ENCODE measurements at regions of chr6 and their contacts with region 1.

Region 1: GRCh38 chr6:152267967-152268845 is 369.0 kb downstream of the SYNE1 start:
- DNase-seq: peak in 7 of 14 experiments; percentile 4 to 49 (median 38)
- ATAC-seq: no peak
- H3K4me3 ChIP-seq: no peak overlapping the region
- H3K4me3 Mint-ChIP-seq: no peak overlapping the region
- H3K27ac ChIP-seq: no peak overlapping the region
- H3K27ac Mint-ChIP-seq: no peak overlapping the region
- H3K4me1 ChIP-seq: no peaks in the 10 kb centered on the region
- H3K4me1 Mint-ChIP-seq: no peaks in the 10 kb centered on the region
- H3K27me3 ChIP-seq: no peaks in the 10 kb centered on the region
- H3K27me3 Mint-ChIP-seq: no peaks in the 10 kb centered on the region
- CTCF ChIP-seq: peak; percentile 87

Region 2: DNA sequence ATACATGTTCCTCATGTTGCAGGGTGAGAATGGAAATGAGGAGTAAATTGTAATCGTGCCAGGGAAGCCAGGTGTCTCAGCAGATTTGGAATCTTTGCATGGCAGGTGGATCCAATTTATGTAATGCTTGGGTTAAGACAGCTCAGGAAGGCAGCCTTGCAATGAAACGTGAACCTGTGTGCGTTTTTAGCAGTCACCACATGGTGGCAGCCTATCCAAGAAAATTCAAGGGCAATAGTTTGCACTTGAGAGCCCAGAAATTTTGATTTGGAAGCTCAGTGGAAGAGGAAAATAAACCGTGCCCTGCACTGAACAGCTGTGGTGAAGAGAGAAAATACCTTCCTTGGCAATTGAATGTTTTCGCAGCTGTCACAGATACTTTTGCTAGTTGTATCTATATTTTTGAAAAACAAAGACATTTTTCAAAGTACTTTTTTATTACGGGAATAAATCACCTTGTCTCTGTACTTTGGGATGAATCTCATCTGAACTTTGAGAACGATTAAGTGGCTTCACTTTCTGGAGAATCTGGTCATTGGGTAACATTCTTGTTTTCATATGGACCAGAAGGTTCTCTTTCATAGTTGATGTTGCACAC is 1376.2 kb before region 1 on chr6:
- CTCF ChIA-PET with region 1: no interaction called
- POLR2A ChIA-PET with region 1: no interaction called
- intact Hi-C with region 1: loop called in 1 of 2 experiments (anchors 5 kb)
- DNase-seq: peak; percentile 30 to 74 (median 50)
- ATAC-seq: peak; percentile 71
- H3K4me3 ChIP-seq: no peak overlapping the region
- H3K4me3 Mint-ChIP-seq: no peak overlapping the region
- H3K27ac ChIP-seq: no peak overlapping the region
- H3K27ac Mint-ChIP-seq: no peak overlapping the region
- H3K4me1 ChIP-seq: peaks cover 7% of the 10 kb centered on the region
- H3K4me1 Mint-ChIP-seq: peaks cover 19% of the 10 kb centered on the region
- H3K27me3 ChIP-seq: no peaks in the 10 kb centered on the region
- H3K27me3 Mint-ChIP-seq: no peaks in the 10 kb centered on the region
- CTCF ChIP-seq: peak; percentile 91

Region 3: GRCh38 chr6:151440930-151441329 is 827.3 kb before region 1 on chr6:
- CTCF ChIA-PET with region 1: no interaction called
- POLR2A ChIA-PET with region 1: no interaction called
- intact Hi-C with region 1: loop called in 1 of 2 experiments (anchors 2 kb)
- DNase-seq: peak in 3 of 14 experiments; percentile 46 to 67 (median 66)
- ATAC-seq: peak; percentile 66
- H3K4me3 ChIP-seq: no peak overlapping the region
- H3K4me3 Mint-ChIP-seq: no peak overlapping the region
- H3K27ac ChIP-seq: no peak overlapping the region
- H3K27ac Mint-ChIP-seq: no peak overlapping the region
- H3K4me1 ChIP-seq: peaks cover 6% of the 10 kb centered on the region
- H3K4me1 Mint-ChIP-seq: peaks cover 52% of the 10 kb centered on the region
- H3K27me3 ChIP-seq: no peaks in the 10 kb centered on the region
- H3K27me3 Mint-ChIP-seq: no peaks in the 10 kb centered on the region
- CTCF ChIP-seq: peak; percentile 65

Region 4: GRCh38 chr6:151675746-151676416 is 592.3 kb before region 1 on chr6:
- CTCF ChIA-PET with region 1: no interaction called
- POLR2A ChIA-PET with region 1: no interaction called
- intact Hi-C with region 1: loop called (anchors 2 kb)
- DNase-seq: peak; percentile 16 to 78 (median 36)
- ATAC-seq: peak; percentile 88
- H3K4me3 ChIP-seq: no peak overlapping the region
- H3K4me3 Mint-ChIP-seq: no peak overlapping the region
- H3K27ac ChIP-seq: no peak overlapping the region
- H3K27ac Mint-ChIP-seq: no peak overlapping the region
- H3K4me1 ChIP-seq: no peaks in the 10 kb centered on the region
- H3K4me1 Mint-ChIP-seq: no peaks in the 10 kb centered on the region
- H3K27me3 ChIP-seq: no peaks in the 10 kb centered on the region
- H3K27me3 Mint-ChIP-seq: no peaks in the 10 kb centered on the region
- CTCF ChIP-seq: peak; percentile 87

Region 5: DNA sequence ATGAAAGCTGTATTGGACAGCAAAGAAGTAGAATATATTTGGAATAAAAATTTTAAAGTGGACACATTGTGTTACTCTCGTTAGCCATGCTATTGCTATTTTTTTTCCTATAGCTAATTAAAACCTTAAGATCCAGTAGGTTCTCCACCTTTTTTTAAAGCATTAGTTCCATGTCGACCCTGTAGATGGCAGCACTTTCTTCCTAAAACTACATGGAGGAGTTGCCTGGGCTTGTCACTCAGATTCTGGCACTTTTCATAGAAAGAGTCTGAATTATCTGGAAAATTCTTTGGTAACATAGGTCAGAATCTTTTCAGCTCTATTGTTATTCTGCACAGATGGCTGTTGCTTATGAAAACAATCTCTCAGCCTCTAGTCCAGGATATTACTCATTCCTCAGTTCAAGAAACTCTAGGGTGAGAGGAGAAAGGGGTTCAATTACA is 502.7 kb before region 1 on chr6:
- CTCF ChIA-PET with region 1: no interaction called
- POLR2A ChIA-PET with region 1: no interaction called
- intact Hi-C with region 1: loop called in 1 of 2 experiments (anchors 2 kb)
- DNase-seq: peak in 6 of 14 experiments; percentile 10 to 65 (median 50)
- ATAC-seq: peak; percentile 56
- H3K4me3 ChIP-seq: no peak overlapping the region
- H3K4me3 Mint-ChIP-seq: no peak overlapping the region
- H3K27ac ChIP-seq: no peak overlapping the region
- H3K27ac Mint-ChIP-seq: no peak overlapping the region
- H3K4me1 ChIP-seq: no peaks in the 10 kb centered on the region
- H3K4me1 Mint-ChIP-seq: peaks cover 24% of the 10 kb centered on the region
- H3K27me3 ChIP-seq: no peaks in the 10 kb centered on the region
- H3K27me3 Mint-ChIP-seq: peaks cover 15% of the 10 kb centered on the region
- CTCF ChIP-seq: peak; percentile 72

Region 6: GRCh38 chr6:152136453-152136825 is 131.8 kb before region 1 on chr6:
- CTCF ChIA-PET with region 1: no interaction called
- POLR2A ChIA-PET with region 1: no interaction called
- intact Hi-C with region 1: loop called in 1 of 2 experiments (anchors 5 kb)
- DNase-seq: no peak
- ATAC-seq: no peak
- H3K4me3 ChIP-seq: no peak overlapping the region
- H3K4me3 Mint-ChIP-seq: no peak overlapping the region
- H3K27ac ChIP-seq: no peak overlapping the region
- H3K27ac Mint-ChIP-seq: no peak overlapping the region
- H3K4me1 ChIP-seq: no peaks in the 10 kb centered on the region
- H3K4me1 Mint-ChIP-seq: no peaks in the 10 kb centered on the region
- H3K27me3 ChIP-seq: no peaks in the 10 kb centered on the region
- H3K27me3 Mint-ChIP-seq: no peaks in the 10 kb centered on the region
- CTCF ChIP-seq: no peak

Region 7: GRCh38 chr6:152309648-152310047 is 41.4 kb after region 1 on chr6:
- CTCF ChIA-PET with region 1: no interaction called
- POLR2A ChIA-PET with region 1: no interaction called
- intact Hi-C with region 1: no loop called
- DNase-seq: peak; percentile 46 to 87 (median 72)
- ATAC-seq: peak; percentile 98
- H3K4me3 ChIP-seq: no peak overlapping the region
- H3K4me3 Mint-ChIP-seq: peak overlapping the region; percentile 36
- H3K27ac ChIP-seq: no peak overlapping the region
- H3K27ac Mint-ChIP-seq: peak overlapping the region; percentile 35
- H3K4me1 ChIP-seq: peaks cover 16% of the 10 kb centered on the region
- H3K4me1 Mint-ChIP-seq: peaks cover 36% of the 10 kb centered on the region
- H3K27me3 ChIP-seq: no peaks in the 10 kb centered on the region
- H3K27me3 Mint-ChIP-seq: no peaks in the 10 kb centered on the region
- CTCF ChIP-seq: no peak

Measured in CD4-positive, alpha-beta T cell (primary cell).